ENCODE measurements at regions of chr17 and their contacts with region 1.

Region 1: GRCh38 chr17:12047681-12048376 is 27.2 kb downstream of the MAP2K4 start:
- DNase-seq: peak in 1 of 2 experiments; percentile 15
- H3K4me3 ChIP-seq: no peak overlapping the region
- H3K27ac ChIP-seq: no peak overlapping the region
- H3K4me1 ChIP-seq: no peaks in the 10 kb centered on the region
- H3K27me3 ChIP-seq: no peaks in the 10 kb centered on the region
- CTCF ChIP-seq: no peak

Region 2: GRCh38 chr17:11997147-11997846 is 50.5 kb before region 1 on chr17 and contains the start of gene ZNF18:
- CTCF ChIA-PET with region 1: interaction called, 3 read pairs
- POLR2A ChIA-PET with region 1: interaction called, 15 read pairs
- intact Hi-C with region 1: loop called (anchors 2 kb)
- DNase-seq: peak; percentile 75 to 98
- H3K4me3 ChIP-seq: peak within 1 kb of the TSS; percentile 90
- H3K27ac ChIP-seq: 0 out of 2 replicates have a peak within 1 kb of the TSS, but pooled peaks have one; percentile 24
- H3K4me1 ChIP-seq: no peaks in the 10 kb centered on the region; the same call in 1 of the 2 replicates
- H3K27me3 ChIP-seq: no peaks in the 10 kb centered on the region
- CTCF ChIP-seq: no peak
- total RNA-seq, gene ZNF18: 6.3 and 7.0 TPM in 2 replicates

Region 3: GRCh38 chr17:12034538-12034937 is 13.3 kb before region 1 on chr17:
- CTCF ChIA-PET with region 1: no interaction called
- POLR2A ChIA-PET with region 1: no interaction called
- intact Hi-C with region 1: no loop called
- DNase-seq: no peak
- H3K4me3 ChIP-seq: no peak overlapping the region
- H3K27ac ChIP-seq: no peak overlapping the region
- H3K4me1 ChIP-seq: no peaks in the 10 kb centered on the region
- H3K27me3 ChIP-seq: no peaks in the 10 kb centered on the region
- CTCF ChIP-seq: no peak

Region 4: DNA sequence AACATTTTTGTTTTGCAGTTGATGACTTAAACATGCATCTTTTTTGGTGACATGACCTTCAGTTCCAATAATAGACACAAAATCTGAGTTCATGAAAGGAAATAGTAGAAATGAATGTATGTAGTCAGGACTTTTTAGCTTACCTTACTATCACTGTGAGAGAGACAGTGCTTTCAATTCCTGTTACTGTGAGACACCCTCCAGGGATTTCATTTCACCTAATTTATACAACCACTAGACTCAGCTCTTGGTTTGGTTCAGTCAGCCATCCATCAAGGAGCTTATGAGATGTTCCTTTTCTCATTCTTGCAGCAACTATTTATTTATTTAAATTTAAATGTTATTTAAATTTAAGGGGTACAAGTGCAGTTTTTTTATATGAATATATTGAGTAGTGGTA is 50.7 kb after region 1 on chr17:
- CTCF ChIA-PET with region 1: no interaction called
- POLR2A ChIA-PET with region 1: interaction called, 14 read pairs
- intact Hi-C with region 1: no loop called
- DNase-seq: no peak
- H3K4me3 ChIP-seq: no peak overlapping the region
- H3K27ac ChIP-seq: no peak overlapping the region
- H3K4me1 ChIP-seq: no peaks in the 10 kb centered on the region
- H3K27me3 ChIP-seq: no peaks in the 10 kb centered on the region
- CTCF ChIP-seq: no peak

Measured in PC-9 (cell line).